Activated naive CD4-positive, alpha-beta T cell treated with anti-CD3 and anti-CD28 coated beads, Interleukin-2, amount 10 ng/mL, durations not matched to agents 7 days and 5 days (primary cell): ENCODE measurements at regions of chr6 and their contacts with region 1.

Region 1: DNA sequence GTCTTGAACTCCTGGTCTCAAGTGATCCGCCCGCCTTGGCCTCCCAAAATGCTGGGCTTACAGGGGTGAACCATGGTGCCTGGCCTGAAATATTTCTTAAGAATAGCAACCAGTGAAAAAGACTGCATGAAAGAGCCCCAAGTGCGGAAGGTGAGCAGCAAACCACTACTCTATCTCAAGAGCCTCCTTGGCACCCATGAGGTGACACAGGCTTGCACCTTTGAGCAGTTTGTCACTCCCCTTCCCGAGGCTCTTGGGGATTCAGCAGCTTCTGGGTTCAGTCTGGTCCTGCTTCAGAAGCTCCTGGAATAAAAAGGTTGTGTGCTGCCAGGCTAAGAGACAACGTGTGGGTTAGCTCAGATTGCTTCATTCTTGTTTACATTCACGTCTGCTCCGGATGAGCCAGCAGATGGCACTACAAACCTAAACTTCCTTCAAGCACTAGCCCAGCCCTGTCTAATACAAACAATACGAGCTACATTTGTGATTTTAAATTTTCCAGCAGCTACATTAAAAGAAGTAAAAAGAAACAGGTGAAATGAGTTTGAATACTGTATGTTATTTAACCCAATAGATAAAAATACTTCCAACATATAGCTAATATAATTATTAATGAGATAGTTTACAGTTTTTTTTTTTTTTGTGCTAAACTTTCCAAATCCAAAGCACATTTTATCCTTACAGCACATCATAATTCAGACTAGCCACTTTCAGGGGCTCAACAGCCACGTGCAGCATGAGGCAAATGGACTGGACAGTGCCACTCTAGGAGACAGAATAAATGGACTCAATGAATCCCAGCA is 46.2 kb downstream of the GJA10 start:
- DNase-seq: peak; percentile 83
- H3K4me3 Mint-ChIP-seq: no peak overlapping the region
- H3K27ac Mint-ChIP-seq: peak overlapping the region; percentile 77
- H3K4me1 Mint-ChIP-seq: peaks cover 49% of the 10 kb centered on the region
- H3K27me3 Mint-ChIP-seq: no peaks in the 10 kb centered on the region

Region 2: DNA sequence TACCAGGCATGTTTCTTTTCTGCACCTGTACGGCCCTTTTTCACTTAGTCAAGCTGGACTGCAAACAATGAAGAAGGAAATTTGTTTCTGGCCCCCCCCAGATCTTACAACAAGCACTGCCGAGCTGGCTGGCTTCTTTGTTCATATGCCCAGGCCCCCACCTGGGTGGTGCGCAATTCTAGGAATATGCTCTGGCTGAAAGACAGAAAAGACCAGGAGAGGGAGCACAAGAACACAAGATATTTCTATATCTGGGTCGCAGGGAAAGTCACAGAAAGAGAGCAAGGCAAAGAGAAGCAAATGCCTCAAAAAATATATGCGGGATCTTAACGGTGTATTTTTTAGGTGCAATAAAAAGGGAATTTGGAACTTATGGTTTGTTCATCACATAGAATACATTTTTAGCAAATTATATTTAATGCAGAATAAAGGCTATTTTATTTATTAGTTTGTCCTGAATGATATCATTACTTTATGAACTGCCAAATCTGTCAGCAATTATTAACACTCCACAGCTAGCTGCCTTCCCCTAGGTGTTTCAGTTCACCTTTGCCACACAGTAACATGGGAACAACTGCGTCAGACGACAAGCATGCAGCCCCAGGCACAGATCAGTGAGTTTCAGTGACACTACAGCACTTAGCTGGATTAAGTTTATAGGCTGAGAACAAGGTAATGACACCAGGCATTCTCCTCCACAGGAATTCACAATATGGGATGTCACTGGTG is 30.3 kb after region 1 on chr6:
- CTCF ChIA-PET with region 1: interaction called, 23 read pairs
- DNase-seq: no peak
- H3K4me3 Mint-ChIP-seq: no peak overlapping the region
- H3K27ac Mint-ChIP-seq: peak overlapping the region; percentile 4
- H3K4me1 Mint-ChIP-seq: peaks cover 16% of the 10 kb centered on the region
- H3K27me3 Mint-ChIP-seq: no peaks in the 10 kb centered on the region

Region 3: GRCh38 chr6:90179190-90180169 is 239.1 kb after region 1 on chr6:
- CTCF ChIA-PET with region 1: interaction called, 21 read pairs
- DNase-seq: no peak
- H3K4me3 Mint-ChIP-seq: no peak overlapping the region
- H3K27ac Mint-ChIP-seq: peak overlapping the region; percentile 91
- H3K4me1 Mint-ChIP-seq: peaks cover 85% of the 10 kb centered on the region
- H3K27me3 Mint-ChIP-seq: no peaks in the 10 kb centered on the region

Region 4: DNA sequence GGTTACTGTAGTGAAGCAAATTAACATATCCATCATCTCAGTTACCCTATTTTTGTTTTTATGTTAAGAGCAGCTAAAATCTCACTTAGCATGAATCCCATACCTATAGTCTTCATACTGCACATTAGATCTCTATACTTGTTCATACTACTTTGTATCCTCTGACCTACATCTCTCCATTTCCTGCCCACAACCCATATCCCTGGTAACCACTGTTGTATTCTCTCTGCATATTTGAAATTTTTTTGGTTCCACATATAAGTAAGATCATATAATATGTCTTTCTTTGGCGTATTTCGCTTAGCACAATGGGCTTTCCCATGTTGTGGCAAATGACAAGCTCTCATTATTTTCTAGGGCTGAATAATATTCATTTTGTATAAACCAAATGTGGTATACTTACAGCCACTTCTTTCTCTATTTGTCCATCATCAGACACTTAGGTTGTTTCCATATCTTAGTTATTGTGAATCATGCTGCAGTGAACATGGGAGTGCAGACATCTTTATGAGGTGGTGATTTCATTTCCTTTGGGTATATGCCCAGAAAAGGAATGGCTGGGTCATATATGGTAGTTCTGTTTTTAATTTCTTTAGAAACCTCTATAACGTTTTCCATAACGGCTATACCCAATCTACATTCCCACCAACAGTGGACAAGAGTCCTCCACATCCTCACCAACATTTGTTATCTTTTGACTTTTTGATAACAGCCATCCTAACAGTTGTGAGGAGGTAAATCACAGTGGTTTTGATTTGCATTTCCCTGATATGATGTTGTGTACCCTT is 316.5 kb after region 1 on chr6:
- CTCF ChIA-PET with region 1: no interaction called
- DNase-seq: no peak
- H3K4me3 Mint-ChIP-seq: no peak overlapping the region
- H3K27ac Mint-ChIP-seq: peak overlapping the region; percentile 19
- H3K4me1 Mint-ChIP-seq: peaks cover 82% of the 10 kb centered on the region
- H3K27me3 Mint-ChIP-seq: no peaks in the 10 kb centered on the region

Region 5: GRCh38 chr6:90285611-90286381 is 345.4 kb after region 1 on chr6:
- CTCF ChIA-PET with region 1: interaction called, 19 read pairs
- DNase-seq: peak; percentile 70
- H3K4me3 Mint-ChIP-seq: peak overlapping the region; percentile 73
- H3K27ac Mint-ChIP-seq: peak overlapping the region; percentile 96
- H3K4me1 Mint-ChIP-seq: peaks cover 93% of the 10 kb centered on the region
- H3K27me3 Mint-ChIP-seq: no peaks in the 10 kb centered on the region